ENCODE measurements at regions of chr4 and their contacts with region 1.

Region 1: GRCh38 chr4:24419181-24420034 is 164.9 kb downstream of the DHX15 start:
- DNase-seq: peak; percentile 67
- H3K4me3 ChIP-seq: no peak overlapping the region
- H3K27ac ChIP-seq: no peak overlapping the region
- H3K4me1 ChIP-seq: no peaks in the 10 kb centered on the region
- H3K27me3 ChIP-seq: no peaks in the 10 kb centered on the region
- CTCF ChIP-seq: peak; percentile 80 to 88 (median 85)
- POLR2A ChIP-seq: no peak

Region 2: GRCh38 chr4:23135792-23136645 is 1283.4 kb before region 1 on chr4:
- intact Hi-C with region 1: loop called (anchors 10 kb)
- DNase-seq: no peak
- H3K4me3 ChIP-seq: no peak overlapping the region
- H3K27ac ChIP-seq: no peak overlapping the region
- H3K4me1 ChIP-seq: no peaks in the 10 kb centered on the region
- H3K27me3 ChIP-seq: no peaks in the 10 kb centered on the region
- CTCF ChIP-seq: peak in 3 of 4 experiments; percentile 48 to 63 (median 55)
- POLR2A ChIP-seq: no peak

Region 3: GRCh38 chr4:23680671-23681518 is 738.5 kb before region 1 on chr4:
- intact Hi-C with region 1: loop called (anchors 10 kb)
- DNase-seq: no peak
- H3K4me3 ChIP-seq: no peak overlapping the region
- H3K27ac ChIP-seq: no peak overlapping the region
- H3K4me1 ChIP-seq: no peaks in the 10 kb centered on the region
- H3K27me3 ChIP-seq: no peaks in the 10 kb centered on the region
- CTCF ChIP-seq: no peak
- POLR2A ChIP-seq: no peak

Region 4: GRCh38 chr4:24655971-24656370 is 236.6 kb after region 1 on chr4:
- intact Hi-C with region 1: no loop called
- DNase-seq: no peak
- H3K4me3 ChIP-seq: no peak overlapping the region
- H3K27ac ChIP-seq: no peak overlapping the region
- H3K4me1 ChIP-seq: no peaks in the 10 kb centered on the region
- H3K27me3 ChIP-seq: no peaks in the 10 kb centered on the region
- CTCF ChIP-seq: no peak
- POLR2A ChIP-seq: no peak

Measured in prostate gland (tissue), 2 donors.